ENCODE measurements at regions of chr2 and their contacts with region 1.

Region 1: GRCh38 chr2:241036397-241036963 is 38.1 kb downstream of the SNED1 start:
- DNase-seq: peak; percentile 63 to 94 (median 77)
- H3K4me3 ChIP-seq: peak overlapping the region; percentile 17 to 83
- H3K4me3 Mint-ChIP-seq: peak overlapping the region; percentile 75 to 91 (median 84)
- H3K27ac ChIP-seq: peak overlapping the region; percentile 68
- H3K27ac Mint-ChIP-seq: peak overlapping the region; percentile 80 to 99 (median 91)
- H3K4me1 ChIP-seq: peaks cover 32% of the 10 kb centered on the region
- H3K4me1 Mint-ChIP-seq: peaks cover 8 to 36% (median 17%) of the 10 kb centered on the region in 4 donors
- H3K27me3 ChIP-seq: no peaks in the 10 kb centered on the region
- H3K27me3 Mint-ChIP-seq: no peaks in the 10 kb centered on the region

Region 2: GRCh38 chr2:240832205-240832727 is 204.2 kb before region 1 on chr2:
- CTCF ChIA-PET with region 1: no interaction called
- POLR2A ChIA-PET with region 1: no interaction called
- intact Hi-C with region 1: loop called (anchors 1 kb)
- DNase-seq: peak; percentile 98 to 99 (median 99)
- H3K4me3 ChIP-seq: peak overlapping the region; percentile 34 to 36
- H3K4me3 Mint-ChIP-seq: peak overlapping the region in 6 of 8 donors; percentile 12 to 81 (median 66)
- H3K27ac ChIP-seq: no peak overlapping the region
- H3K27ac Mint-ChIP-seq: peak overlapping the region in 3 of 7 donors; percentile 55 to 91 (median 82)
- H3K4me1 ChIP-seq: peaks cover 12% of the 10 kb centered on the region
- H3K4me1 Mint-ChIP-seq: peaks cover 0 to 6% (median 3%) of the 10 kb centered on the region in 4 donors
- H3K27me3 ChIP-seq: peaks cover 10% of the 10 kb centered on the region
- H3K27me3 Mint-ChIP-seq: peaks cover 8 to 16% of the 10 kb centered on the region in 2 donors

Measured in CD4-positive, alpha-beta memory T cell (primary cell).